Caki2 (cell line): ENCODE measurements at regions of chr7 and their contacts with region 1.

Region 1: DNA sequence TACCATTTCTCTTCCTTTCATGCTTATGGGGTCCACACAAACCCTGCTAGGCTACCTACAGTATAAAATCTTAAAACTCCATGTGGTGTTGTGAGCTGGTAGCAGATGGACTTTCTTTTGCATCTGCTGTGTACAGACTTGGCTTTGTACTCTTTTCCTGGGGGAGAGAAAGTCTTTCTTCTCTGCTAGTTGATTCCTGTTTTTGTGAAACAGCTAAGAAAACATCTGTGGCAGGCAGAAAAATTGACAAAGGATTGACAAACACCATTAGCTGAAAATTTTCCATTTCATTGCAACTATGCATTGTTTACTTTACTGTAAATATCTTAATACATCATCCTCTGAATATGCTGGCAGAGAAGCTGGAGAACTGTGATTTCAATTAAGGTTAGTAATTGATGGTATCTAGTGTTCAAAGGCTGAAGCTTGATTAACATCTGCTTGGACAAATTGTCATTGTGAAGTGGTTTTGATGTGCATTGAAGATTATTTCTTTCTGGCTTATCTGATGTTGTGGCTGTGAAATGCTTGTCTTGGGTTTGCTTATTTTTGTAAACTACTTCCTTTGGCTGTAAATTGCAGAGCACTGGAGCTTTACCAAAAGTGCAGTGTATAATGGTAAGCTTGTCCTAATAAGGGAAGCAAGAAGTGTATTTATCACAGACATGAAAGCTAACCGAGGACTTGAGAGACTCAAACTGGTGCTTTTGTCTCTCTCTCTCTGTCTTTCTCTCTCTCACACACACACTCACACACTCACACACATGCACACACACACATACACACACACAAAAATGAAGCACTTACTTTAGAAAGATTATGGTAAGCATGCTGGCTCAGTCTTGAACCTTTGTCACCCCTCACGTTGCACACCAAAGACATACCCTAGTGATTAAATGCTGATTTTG is at the start of gene FOXP2:
- DNase-seq: peak; percentile 85
- total RNA-seq, gene FOXP2: 2.4 and 4.2 TPM in 2 replicates

Region 2: DNA sequence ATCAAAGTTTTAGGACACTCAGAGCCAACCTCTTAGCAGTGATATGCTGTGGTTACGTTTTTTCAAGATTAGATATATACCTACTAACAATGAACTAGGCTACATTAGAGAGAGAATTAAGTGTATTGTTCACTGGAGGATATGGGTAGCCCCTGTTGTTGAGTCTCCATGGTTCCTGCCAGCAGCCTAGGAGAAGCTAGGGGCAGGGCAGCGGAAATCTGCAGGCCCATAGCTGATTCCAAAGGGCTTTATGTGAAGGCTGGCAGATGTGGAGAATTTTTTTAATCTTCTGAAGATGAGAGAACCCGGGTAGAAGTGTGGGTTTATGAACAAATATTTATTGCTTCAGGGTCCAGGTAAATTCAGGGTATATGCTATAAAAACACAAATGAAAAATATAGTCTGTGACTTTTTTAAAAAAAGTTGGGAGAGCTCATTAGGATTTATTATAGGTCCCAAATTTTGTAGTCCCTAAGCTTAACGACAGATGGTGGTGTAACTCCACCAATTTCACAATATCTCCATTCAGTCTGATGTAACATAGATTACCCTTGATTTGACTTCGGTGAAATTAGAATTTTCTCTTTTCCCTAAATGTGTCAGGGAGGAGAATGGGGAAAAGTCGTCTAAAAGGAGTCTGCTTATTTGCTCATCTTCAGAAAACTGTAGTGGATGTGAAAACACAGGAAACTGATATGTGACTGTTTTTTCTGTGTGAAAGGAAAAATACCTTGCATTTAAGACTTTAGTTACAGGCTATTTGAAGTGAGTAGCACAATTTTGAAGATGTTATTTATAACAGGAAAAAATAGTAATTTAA is 332.6 kb before region 1 on chr7:
- in situ Hi-C with region 1: loop called (anchors 5 kb)
- DNase-seq: peak; percentile 58

Region 3: DNA sequence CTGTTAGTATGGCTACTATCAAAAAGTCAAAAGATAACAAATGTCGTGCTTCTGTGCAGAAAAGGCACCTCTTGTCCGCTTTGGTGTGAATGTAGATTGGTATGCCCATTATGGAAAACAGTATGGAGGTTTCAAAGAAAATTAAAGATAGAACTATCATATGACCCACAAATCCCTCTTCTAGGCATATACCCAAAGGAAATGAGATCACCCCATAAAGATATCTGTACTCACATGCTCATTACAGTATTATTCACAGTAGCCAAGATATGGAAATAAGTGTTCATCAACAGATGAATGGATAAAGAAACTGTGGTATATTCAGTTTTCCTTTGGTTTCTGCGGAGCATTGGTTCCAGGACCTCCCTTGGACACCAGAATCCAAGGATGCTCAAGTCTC is 315.1 kb before region 1 on chr7:
- in situ Hi-C with region 1: no loop called
- DNase-seq: no peak

Region 4: GRCh38 chr7:114663502-114663901 is 249.1 kb after region 1 on chr7:
- in situ Hi-C with region 1: no loop called
- DNase-seq: peak; percentile 4